A549 (cell line): ENCODE measurements at regions of chr2 and their contacts with region 1.

Region 1: GRCh38 chr2:235116885-235117492 is 165.2 kb downstream of the SH3BP4 start:
- DNase-seq: peak in 1 of 2 experiments; percentile 58
- ATAC-seq: peak in 1 of 2 experiments; percentile 48; a peak in 2 of 6 replicates
- H3K4me3 ChIP-seq: no peak overlapping the region
- H3K27ac ChIP-seq: peak overlapping the region; percentile 2 to 30; a peak in 3 of 6 replicates
- H3K4me1 ChIP-seq: peaks cover 9% of the 10 kb centered on the region
- CTCF ChIP-seq: peak; percentile 90
- EP300 ChIP-seq: no peak
- POLR2A ChIP-seq: no peak
- RAD21 ChIP-seq: peak; percentile 89 to 94

Region 2: GRCh38 chr2:234536178-234536965 is 580.6 kb before region 1 on chr2:
- CTCF ChIA-PET with region 1: interaction called, 11 read pairs
- POLR2A ChIA-PET with region 1: no interaction called
- DNase-seq: no peak
- ATAC-seq: no peak
- H3K4me3 ChIP-seq: no peak overlapping the region
- H3K27ac ChIP-seq: no peak overlapping the region
- H3K4me1 ChIP-seq: no peaks in the 10 kb centered on the region
- CTCF ChIP-seq: no peak
- EP300 ChIP-seq: no peak
- POLR2A ChIP-seq: no peak
- RAD21 ChIP-seq: no peak

Region 3: DNA sequence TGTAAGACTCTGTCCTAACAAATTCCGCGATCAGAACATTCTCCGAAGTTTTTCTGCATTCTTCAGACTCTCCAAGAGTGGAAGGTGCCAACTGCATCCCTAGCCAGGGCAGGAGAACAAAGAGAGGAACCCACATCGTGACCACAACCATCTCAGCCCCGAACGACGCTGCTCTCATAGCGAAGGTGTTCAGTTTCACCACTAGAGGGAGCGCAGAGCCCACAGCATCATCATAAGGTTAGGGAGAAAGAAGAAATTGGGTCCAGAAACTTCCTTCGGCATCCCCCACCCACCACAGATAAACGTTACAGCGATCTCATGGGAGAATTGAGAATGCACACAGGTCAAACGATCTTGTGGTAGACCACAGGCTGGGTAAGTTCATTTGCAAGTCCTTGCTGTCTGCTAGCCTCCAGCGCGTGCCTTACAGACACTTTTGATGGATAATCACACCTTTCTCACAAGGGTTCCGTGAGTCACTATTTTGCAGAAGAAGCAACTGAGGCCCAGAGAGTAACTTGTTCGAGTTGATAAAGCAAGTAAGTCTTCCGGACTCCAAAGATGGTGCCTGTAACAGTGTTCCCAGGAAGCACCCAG is 566.4 kb before region 1 on chr2:
- CTCF ChIA-PET with region 1: interaction called, 163 read pairs
- POLR2A ChIA-PET with region 1: no interaction called
- DNase-seq: peak; percentile 63 to 74
- ATAC-seq: peak; percentile 93 to 97
- H3K4me3 ChIP-seq: no peak overlapping the region
- H3K27ac ChIP-seq: peak overlapping the region; percentile 52 to 65
- H3K4me1 ChIP-seq: peaks cover 6% of the 10 kb centered on the region; the same call in 2 of the 3 replicates
- CTCF ChIP-seq: peak; percentile 98
- EP300 ChIP-seq: no peak
- POLR2A ChIP-seq: no peak
- RAD21 ChIP-seq: peak; percentile 99 to 100

Region 4: DNA sequence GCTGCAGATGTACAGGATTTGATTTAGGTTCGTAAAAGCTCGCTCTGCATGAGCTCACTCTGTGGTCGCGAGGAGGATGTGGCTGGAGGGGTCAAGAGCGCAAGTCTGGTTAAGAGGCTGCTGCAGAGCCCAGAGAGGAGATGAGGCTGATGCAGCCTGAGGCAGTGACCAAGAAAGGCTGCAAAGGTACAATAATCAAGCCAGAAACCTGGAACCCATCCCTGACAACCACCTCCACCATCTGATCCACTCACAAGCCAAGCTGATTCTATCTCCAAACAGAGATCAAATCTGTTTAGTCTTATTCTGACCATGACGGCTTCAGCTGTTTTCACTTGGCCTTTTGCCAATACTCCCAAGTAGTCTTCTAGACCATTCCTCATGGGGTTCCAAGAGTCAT is 561.3 kb before region 1 on chr2:
- CTCF ChIA-PET with region 1: interaction called, 163 read pairs
- POLR2A ChIA-PET with region 1: no interaction called
- DNase-seq: no peak
- ATAC-seq: no peak
- H3K4me3 ChIP-seq: no peak overlapping the region
- H3K27ac ChIP-seq: peak overlapping the region; percentile 52 to 77; a peak in 5 of 6 replicates
- H3K4me1 ChIP-seq: peaks cover 30% of the 10 kb centered on the region
- CTCF ChIP-seq: no peak
- EP300 ChIP-seq: no peak
- POLR2A ChIP-seq: no peak
- RAD21 ChIP-seq: no peak

Region 5: DNA sequence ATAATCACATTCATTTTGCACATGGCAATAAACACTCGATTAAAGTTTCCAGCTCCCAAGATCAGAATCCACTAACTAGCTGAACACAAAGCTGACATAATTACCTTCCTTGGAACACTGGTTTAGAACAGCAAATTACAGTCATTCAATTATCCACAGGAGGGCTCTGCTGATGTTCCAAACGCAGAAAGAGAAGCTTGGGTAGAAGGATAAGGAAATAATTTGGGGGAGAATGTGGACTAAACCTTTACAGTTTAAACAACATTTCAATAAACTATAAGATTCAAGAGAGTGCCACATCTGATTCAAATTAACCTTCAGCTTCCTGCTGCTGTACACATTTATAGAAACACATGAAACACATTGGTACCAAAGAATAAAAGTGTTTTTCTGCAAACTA is 552.3 kb before region 1 on chr2:
- CTCF ChIA-PET with region 1: interaction called, 15 read pairs
- POLR2A ChIA-PET with region 1: interaction called, 3 read pairs
- DNase-seq: no peak
- ATAC-seq: peak in 1 of 2 experiments; percentile 47; a peak in 1 of 6 replicates
- H3K4me3 ChIP-seq: no peak overlapping the region
- H3K27ac ChIP-seq: peak overlapping the region; percentile 7 to 43; a peak in 3 of 6 replicates
- H3K4me1 ChIP-seq: peaks cover 5% of the 10 kb centered on the region
- CTCF ChIP-seq: peak; percentile 47
- EP300 ChIP-seq: no peak
- POLR2A ChIP-seq: no peak
- RAD21 ChIP-seq: peak; percentile 42 to 76

Region 6: DNA sequence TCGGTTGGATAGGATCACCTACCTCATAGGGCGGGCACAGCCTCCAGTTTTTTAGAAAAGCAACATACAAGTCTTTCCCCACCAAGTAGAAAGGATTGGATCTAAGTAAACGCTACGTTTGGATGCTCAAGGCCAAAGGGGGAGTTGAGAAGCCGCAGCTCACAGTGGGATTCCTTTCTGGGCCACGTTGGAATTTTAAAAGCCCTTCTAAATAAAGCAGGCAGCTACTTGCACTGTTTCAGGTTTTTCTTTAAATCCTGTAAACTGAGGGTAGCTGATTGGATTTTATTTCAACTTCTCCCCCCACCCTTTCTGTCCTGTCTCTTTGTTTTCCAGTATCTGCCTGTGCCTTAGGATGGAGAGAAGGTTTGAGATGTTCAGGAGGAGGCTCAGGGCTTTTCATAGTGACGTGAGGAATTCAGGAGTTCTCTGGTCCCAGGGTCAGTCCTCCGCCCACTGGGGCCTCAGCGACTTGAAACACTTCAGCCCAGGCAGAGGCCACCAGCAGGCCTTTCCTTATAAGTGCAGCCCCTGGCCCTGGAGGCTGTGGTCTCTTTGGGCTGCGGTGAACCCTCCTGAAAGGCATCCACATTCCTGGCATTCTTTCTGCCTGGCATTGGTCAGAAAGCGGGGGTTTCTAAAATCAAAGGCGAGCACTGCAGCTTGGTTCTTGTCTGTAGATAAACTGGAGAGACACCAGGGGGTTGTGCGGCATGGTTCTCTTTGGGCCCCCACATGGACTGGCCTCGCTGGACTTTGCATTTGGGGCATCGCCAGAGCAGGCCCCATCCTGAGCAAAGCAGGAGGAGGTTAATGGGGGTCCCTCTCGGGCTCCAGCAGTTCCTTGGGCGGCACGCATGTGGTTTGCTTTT is 120.7 kb before region 1 on chr2:
- CTCF ChIA-PET with region 1: no interaction called
- POLR2A ChIA-PET with region 1: no interaction called
- DNase-seq: peak; percentile 47 to 59
- ATAC-seq: peak; percentile 55 to 79; a peak in 4 of 6 replicates
- H3K4me3 ChIP-seq: no peak overlapping the region
- H3K27ac ChIP-seq: peak overlapping the region; percentile 80 to 87
- H3K4me1 ChIP-seq: peaks cover 72% of the 10 kb centered on the region
- CTCF ChIP-seq: no peak
- EP300 ChIP-seq: no peak
- POLR2A ChIP-seq: no peak
- RAD21 ChIP-seq: peak in 1 of 2 experiments; percentile 21; a peak in 1 of 5 replicates